Activated naive CD4-positive, alpha-beta T cell treated with anti-CD3 and anti-CD28 coated beads for 36 hours (primary cell): ENCODE measurements at regions of chr12 and their contacts with region 1.

Region 1: GRCh38 chr12:124321040-124321481 is 26.2 kb downstream of the RFLNA start:
- DNase-seq: peak; percentile 81
- H3K4me3 Mint-ChIP-seq: no peak overlapping the region
- H3K27ac Mint-ChIP-seq: no peak overlapping the region
- H3K4me1 Mint-ChIP-seq: no peaks in the 10 kb centered on the region
- H3K27me3 Mint-ChIP-seq: no peaks in the 10 kb centered on the region

Region 2: GRCh38 chr12:124036674-124037109 is 284.4 kb before region 1 on chr12:
- CTCF ChIA-PET with region 1: interaction called, 9 read pairs
- intact Hi-C with region 1: loop called (anchors 1 kb)
- DNase-seq: peak; percentile 59
- H3K4me3 Mint-ChIP-seq: no peak overlapping the region
- H3K27ac Mint-ChIP-seq: no peak overlapping the region
- H3K4me1 Mint-ChIP-seq: no peaks in the 10 kb centered on the region
- H3K27me3 Mint-ChIP-seq: peaks cover 2% of the 10 kb centered on the region

Region 3: DNA sequence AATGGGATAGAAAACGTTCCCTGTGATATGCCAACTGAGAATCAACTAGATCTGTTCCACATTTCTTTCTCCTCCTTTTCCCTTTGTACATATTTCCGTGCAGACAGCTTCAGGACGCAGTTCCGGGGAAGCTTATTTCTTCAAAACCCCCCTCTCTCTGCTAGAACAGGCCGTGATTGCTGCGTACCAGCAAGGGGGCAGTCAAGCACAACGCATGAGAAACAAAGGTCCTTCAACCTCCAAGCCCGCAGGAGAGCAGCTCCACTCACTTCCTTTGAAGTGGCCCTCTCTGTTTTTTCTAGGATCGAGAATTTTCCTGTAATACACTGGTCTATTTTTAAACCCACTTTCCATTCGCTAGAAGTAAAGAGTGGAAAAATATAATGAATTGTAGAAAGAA is 267.2 kb before region 1 on chr12:
- CTCF ChIA-PET with region 1: interaction called, 3 read pairs
- intact Hi-C with region 1: loop called (anchors 1 kb)
- DNase-seq: peak; percentile 28
- H3K4me3 Mint-ChIP-seq: no peak overlapping the region
- H3K27ac Mint-ChIP-seq: no peak overlapping the region
- H3K4me1 Mint-ChIP-seq: no peaks in the 10 kb centered on the region
- H3K27me3 Mint-ChIP-seq: peaks cover 5% of the 10 kb centered on the region

Region 4: DNA sequence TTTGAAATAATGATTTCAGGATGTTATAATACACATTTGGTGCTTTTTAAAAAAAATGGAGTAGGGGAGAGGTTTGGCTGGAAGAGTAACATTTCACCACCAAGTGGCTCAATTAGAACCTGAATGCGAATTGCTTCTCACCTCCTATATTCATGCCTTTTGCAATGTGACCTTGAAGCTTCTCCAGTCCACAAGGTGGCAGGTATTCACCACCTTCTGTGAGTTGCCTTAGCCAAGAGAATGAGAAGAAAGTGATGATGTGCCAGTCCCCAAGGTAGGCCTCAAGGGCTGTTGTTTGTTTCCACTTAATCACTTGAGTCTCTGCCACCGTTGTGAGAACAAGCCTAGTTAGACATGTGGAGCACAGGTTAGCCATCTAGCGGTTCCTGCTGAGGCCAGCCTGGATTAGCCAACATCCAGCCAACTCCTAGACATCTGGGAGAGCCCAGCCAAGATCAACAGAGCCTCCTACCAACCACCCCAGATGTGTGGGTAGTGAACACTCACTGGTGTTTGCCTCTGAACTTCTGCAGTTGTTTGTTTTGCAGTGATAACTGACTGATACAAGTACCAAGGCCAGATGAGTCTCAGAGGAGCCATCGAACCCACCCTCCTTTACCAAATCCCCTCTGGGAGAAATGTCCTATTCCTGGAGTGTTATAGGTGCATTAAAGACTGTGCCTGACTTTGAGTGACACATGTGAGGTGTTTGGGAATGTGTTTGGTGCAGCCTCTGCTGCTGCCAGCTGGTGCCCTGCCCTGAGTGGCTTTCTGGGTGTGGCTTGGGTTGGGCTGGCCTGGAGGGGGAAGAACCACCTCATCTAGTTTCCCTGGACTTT is 158.7 kb before region 1 on chr12:
- CTCF ChIA-PET with region 1: no interaction called
- intact Hi-C with region 1: loop called (anchors 1 kb)
- DNase-seq: peak; percentile 42
- H3K4me3 Mint-ChIP-seq: no peak overlapping the region
- H3K27ac Mint-ChIP-seq: no peak overlapping the region
- H3K4me1 Mint-ChIP-seq: no peaks in the 10 kb centered on the region
- H3K27me3 Mint-ChIP-seq: no peaks in the 10 kb centered on the region